ENCODE measurements at regions of chr17 and their contacts with region 1.

Region 1: DNA sequence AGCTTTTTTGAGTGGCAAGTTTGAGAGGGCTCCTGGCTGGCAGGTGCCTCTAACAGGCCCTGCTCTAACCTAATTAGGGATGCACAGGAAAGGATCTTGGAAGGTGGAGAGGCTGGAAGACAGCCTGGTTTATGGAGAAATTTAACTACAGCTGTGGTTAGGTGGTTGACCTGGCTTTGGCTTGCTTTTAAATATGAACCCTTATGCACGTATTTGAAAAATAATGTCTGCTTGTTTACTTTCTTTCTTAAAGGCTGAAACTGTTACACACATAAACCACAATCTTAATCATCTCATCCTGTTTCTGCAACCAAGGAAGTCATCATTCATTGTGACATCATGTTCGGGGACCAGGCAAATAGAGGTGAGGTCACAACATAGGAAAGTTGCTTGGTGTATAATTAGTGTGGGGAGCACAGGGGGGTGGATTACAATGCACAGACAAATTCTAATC is 23.1 kb upstream of the DHRS13 start:
- DNase-seq: no peak
- ATAC-seq: no peak
- H3K4me3 ChIP-seq: no peak overlapping the region
- H3K27ac ChIP-seq: no peak overlapping the region
- H3K4me1 ChIP-seq: no peaks in the 10 kb centered on the region
- H3K27me3 ChIP-seq: no peaks in the 10 kb centered on the region
- CTCF ChIP-seq: no peak
- EP300 ChIP-seq: no peak
- POLR2A ChIP-seq: no peak
- RAD21 ChIP-seq: no peak

Region 2: GRCh38 chr17:27089929-27090247 is 1836.1 kb before region 1 on chr17:
- CTCF ChIA-PET with region 1: no interaction called
- POLR2A ChIA-PET with region 1: no interaction called
- in situ Hi-C with region 1: no loop called
- intact Hi-C with region 1: loop called (anchors 10 kb)
- DNase-seq: no peak
- ATAC-seq: no peak
- H3K4me3 ChIP-seq: no peak overlapping the region
- H3K27ac ChIP-seq: no peak overlapping the region
- H3K4me1 ChIP-seq: no peaks in the 10 kb centered on the region
- H3K27me3 ChIP-seq: 0 out of 5 replicates have a peak, but pooled peaks cover 0 to 5% of the 10 kb centered on the region in 2 experiments
- CTCF ChIP-seq: no peak
- EP300 ChIP-seq: no peak
- POLR2A ChIP-seq: no peak
- RAD21 ChIP-seq: no peak

Measured in HepG2 (cell line).